ENCODE measurements at regions of chr17 and their contacts with region 1.

Region 1: DNA sequence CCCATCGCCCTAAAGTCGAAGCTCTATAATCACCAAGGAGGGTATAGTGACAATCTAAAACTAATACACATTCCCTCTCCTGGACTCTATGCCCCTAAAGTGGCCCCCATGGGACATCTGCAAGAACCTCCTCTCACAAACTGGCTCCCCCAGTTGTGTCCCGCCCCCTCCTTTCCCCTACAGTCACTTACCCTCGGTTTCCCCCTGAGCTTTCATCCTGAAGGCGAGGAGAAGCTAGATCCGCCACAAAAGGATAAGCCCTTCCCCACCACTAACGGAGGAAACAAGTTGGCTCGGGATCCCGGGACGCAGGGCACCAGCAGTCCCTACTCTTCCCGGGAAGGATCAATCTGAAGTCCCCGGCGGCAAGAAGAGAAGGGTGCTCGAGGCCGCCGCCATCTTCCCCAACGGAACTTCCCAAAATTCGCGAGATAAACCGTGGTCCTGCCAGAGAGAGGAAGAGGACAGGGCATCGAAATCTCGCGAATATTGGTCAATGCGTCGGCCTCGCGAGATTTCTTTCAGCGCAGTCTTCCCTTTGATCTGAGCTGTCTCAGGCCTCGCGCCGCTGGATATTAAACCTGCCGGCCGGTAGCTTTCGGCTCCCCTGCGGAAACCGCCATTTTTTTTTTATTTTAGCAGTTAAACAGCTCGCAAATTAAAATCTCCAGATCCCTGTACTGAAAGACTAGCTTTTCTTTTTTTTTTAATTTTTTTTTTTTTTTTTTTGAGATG is at the start of gene MED1:
- DNase-seq: peak; percentile 88 to 96
- H3K4me3 ChIP-seq: peak within 1 kb of the TSS; percentile 77 to 100 (median 90)
- H3K27ac ChIP-seq: peak within 1 kb of the TSS; percentile 92
- H3K4me1 ChIP-seq: no peaks in the 10 kb centered on the region; a peak in 1 of 7 replicates
- H3K27me3 ChIP-seq: no peaks in the 10 kb centered on the region
- CTCF ChIP-seq: no peak
- EP300 ChIP-seq: no peak
- POLR2A ChIP-seq: peak; percentile 90 to 97
- RAD21 ChIP-seq: no peak
- total RNA-seq, gene MED1: 56.5 and 57.6 TPM in 2 replicates

Region 2: GRCh38 chr17:39365242-39365641 is 85.8 kb before region 1 on chr17:
- CTCF ChIA-PET with region 1: no interaction called
- POLR2A ChIA-PET with region 1: no interaction called
- DNase-seq: no peak
- H3K4me3 ChIP-seq: no peak overlapping the region
- H3K27ac ChIP-seq: no peak overlapping the region
- H3K4me1 ChIP-seq: no peaks in the 10 kb centered on the region
- H3K27me3 ChIP-seq: no peaks in the 10 kb centered on the region
- CTCF ChIP-seq: no peak
- EP300 ChIP-seq: no peak
- POLR2A ChIP-seq: no peak
- RAD21 ChIP-seq: no peak

Region 3: GRCh38 chr17:39401412-39402243 is 49.4 kb before region 1 on chr17 and contains the start of gene FBXL20:
- CTCF ChIA-PET with region 1: no interaction called
- POLR2A ChIA-PET with region 1: interaction called, 10 read pairs
- DNase-seq: peak; percentile 62 to 91
- H3K4me3 ChIP-seq: peak within 1 kb of the TSS; percentile 81 to 91 (median 86)
- H3K27ac ChIP-seq: peak within 1 kb of the TSS; percentile 79; the same call in 1 of the 2 replicates
- H3K4me1 ChIP-seq: no peaks in the 10 kb centered on the region
- H3K27me3 ChIP-seq: no peaks in the 10 kb centered on the region
- CTCF ChIP-seq: no peak
- EP300 ChIP-seq: 0 out of 3 replicates have a peak, but pooled peaks of 1 of the 2 experiments have one; percentile 60
- POLR2A ChIP-seq: peak; percentile 79 to 90
- RAD21 ChIP-seq: no peak
- total RNA-seq, gene FBXL20: 10.3 and 11.0 TPM in 2 replicates

Region 4: DNA sequence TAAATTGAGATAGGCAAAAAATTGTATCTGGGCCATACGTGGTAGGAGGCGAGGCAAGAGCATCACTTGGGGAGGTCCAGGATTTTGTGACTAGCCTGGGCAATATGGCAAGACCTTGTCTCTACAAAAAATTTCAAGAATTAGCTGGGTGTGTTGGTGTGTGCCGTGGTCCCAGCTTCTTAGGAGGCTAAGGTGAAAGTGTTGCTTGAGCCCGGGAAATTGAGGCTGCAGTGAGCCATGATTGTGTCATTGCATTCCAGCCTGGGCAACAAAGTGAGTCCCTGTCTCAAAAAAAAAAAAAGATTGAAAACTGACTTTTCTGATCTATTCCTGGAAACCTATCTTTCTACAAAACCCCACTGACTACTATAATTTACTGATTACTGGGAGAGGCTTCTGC is 36.9 kb after region 1 on chr17:
- CTCF ChIA-PET with region 1: no interaction called
- POLR2A ChIA-PET with region 1: interaction called, 11 read pairs
- DNase-seq: no peak
- H3K4me3 ChIP-seq: no peak overlapping the region
- H3K27ac ChIP-seq: no peak overlapping the region
- H3K4me1 ChIP-seq: no peaks in the 10 kb centered on the region
- H3K27me3 ChIP-seq: no peaks in the 10 kb centered on the region
- CTCF ChIP-seq: no peak
- EP300 ChIP-seq: no peak
- POLR2A ChIP-seq: no peak
- RAD21 ChIP-seq: no peak

Region 5: DNA sequence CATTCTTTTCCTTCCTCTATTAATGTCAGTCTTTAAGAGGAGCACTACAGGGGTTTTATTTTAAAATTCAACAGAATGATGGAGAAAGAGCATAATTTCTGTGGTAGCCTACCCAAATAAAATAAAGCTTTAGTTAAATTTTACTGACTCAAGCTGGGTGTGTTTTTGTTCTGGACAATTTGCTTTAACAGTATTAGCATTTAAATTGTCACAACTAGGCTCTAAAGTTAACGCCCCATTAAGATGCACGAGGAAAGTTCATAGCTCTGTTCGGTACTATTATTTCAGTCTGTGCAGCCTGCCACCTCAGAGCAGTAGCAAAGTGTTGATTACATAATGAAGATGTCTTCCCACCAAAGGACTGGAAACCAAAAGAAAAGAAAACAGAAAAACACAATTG is 62.3 kb after region 1 on chr17:
- CTCF ChIA-PET with region 1: no interaction called
- POLR2A ChIA-PET with region 1: no interaction called
- DNase-seq: no peak
- H3K4me3 ChIP-seq: no peak overlapping the region
- H3K27ac ChIP-seq: no peak overlapping the region
- H3K4me1 ChIP-seq: no peaks in the 10 kb centered on the region
- H3K27me3 ChIP-seq: no peaks in the 10 kb centered on the region
- CTCF ChIP-seq: no peak
- EP300 ChIP-seq: no peak
- POLR2A ChIP-seq: no peak
- RAD21 ChIP-seq: no peak

Region 6: GRCh38 chr17:39533899-39534298 is 82.9 kb after region 1 on chr17:
- CTCF ChIA-PET with region 1: no interaction called
- POLR2A ChIA-PET with region 1: no interaction called
- DNase-seq: no peak
- H3K4me3 ChIP-seq: no peak overlapping the region
- H3K27ac ChIP-seq: no peak overlapping the region
- H3K4me1 ChIP-seq: no peaks in the 10 kb centered on the region
- H3K27me3 ChIP-seq: no peaks in the 10 kb centered on the region
- CTCF ChIP-seq: no peak
- EP300 ChIP-seq: no peak
- POLR2A ChIP-seq: no peak
- RAD21 ChIP-seq: no peak

Measured in H1 (cell line).